Body of pancreas (tissue), 4 donors: ENCODE measurements at regions of chr6 and their contacts with region 1.

Region 1: DNA sequence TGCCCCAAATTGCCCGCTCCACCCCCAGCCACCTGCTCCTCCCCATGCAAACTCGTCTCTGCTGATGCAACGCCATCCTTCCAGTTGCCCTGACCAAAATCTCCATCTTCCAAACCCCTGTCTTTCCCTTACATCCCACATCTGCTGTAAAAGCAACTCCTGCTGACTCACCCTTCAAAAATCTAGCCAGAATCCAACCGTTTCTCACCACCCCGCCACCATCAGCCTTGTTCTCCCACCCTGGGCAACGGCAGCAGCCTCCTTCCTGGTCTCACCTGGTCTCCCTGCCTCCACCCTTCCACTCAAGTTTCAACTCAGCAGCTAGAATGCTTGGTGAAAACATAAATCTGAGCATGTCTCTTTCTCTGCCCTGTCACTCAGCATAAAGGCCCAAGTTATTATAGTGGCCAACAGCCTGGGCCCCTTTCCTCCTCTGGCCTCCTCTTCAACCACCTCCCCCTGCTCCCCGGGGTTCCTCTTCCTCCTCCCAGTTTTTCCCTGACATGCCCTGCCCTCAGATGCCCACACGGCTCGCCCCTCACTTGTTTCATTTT is 7.2 kb upstream of the SYNJ2 start:
- DNase-seq: no peak
- ATAC-seq: no peak
- H3K4me3 ChIP-seq: no peak overlapping the region
- H3K27ac ChIP-seq: peak overlapping the region in 2 of 4 donors; percentile 16 to 29
- H3K4me1 ChIP-seq: peaks cover 7% of the 10 kb centered on the region
- H3K27me3 ChIP-seq: no peaks in the 10 kb centered on the region
- CTCF ChIP-seq: no peak
- POLR2A ChIP-seq: no peak

Region 2: DNA sequence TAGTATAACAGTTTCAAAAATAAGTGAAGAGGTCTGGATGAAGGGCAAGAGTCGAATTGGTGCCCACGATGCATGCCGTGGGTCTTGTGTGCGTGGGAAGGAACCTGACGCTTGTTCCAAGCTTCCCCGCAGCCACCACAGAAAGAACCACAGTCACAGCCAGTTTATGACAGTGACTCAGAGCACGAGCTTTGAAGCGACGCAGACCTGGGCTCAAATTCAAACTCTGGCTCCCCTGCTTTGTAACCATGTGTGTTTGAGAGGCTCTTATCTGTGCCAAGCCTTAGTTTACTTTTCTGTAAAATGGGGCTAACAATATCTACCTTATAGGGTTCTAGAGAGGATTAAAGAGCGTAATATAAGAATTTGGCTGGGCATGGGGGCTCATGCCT is 72.7 kb after region 1 on chr6:
- intact Hi-C with region 1: no loop called
- DNase-seq: peak in 1 of 4 donors; percentile 11
- ATAC-seq: no peak
- H3K4me3 ChIP-seq: no peak overlapping the region
- H3K27ac ChIP-seq: no peak overlapping the region
- H3K4me1 ChIP-seq: no peaks in the 10 kb centered on the region
- H3K27me3 ChIP-seq: no peaks in the 10 kb centered on the region
- CTCF ChIP-seq: no peak
- POLR2A ChIP-seq: no peak

Region 3: DNA sequence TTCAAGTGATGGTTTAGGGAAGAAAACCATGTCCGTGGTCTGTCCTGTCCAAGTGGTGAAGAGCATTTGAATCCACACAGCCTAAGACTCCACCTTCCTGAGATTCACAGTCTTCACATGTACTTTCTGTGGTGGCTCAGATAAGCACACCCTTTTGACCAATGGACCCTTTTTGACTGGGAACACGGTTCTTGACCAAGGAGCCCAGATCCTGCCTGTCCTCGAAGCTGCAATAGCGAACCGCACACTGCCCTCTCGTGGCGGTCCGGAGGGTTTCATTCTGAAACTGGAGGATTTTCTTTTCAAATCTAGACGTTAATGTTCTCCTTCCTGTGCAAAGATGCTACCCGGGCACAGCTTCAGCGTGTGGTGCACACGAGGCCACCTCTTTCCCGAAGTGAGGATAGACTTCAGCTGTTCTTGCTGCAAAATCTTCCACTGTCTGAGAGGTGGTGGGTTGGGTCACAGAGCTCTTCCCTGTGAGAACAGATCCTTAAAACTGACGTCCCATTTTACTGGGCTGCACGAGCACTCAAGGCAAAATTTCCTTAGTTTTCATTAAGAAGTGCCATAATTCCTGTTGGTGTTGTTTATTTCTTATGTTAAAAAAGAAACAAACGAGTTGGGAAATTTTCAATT is 97.8 kb after region 1 on chr6:
- intact Hi-C with region 1: loop called (anchors 10 kb)
- DNase-seq: peak; percentile 75 to 76 (median 76)
- ATAC-seq: peak; percentile 69
- H3K4me3 ChIP-seq: no peak overlapping the region
- H3K27ac ChIP-seq: no peak overlapping the region
- H3K4me1 ChIP-seq: peaks cover 9% of the 10 kb centered on the region
- H3K27me3 ChIP-seq: no peaks in the 10 kb centered on the region
- CTCF ChIP-seq: peak; percentile 46 to 82 (median 80)
- POLR2A ChIP-seq: no peak